BJ (cell line): ENCODE measurements at regions of chr1 and their contacts with region 1.

Region 1: GRCh38 chr1:103087256-103087655 is 21.1 kb downstream of the COL11A1 start:
- DNase-seq: no peak
- H3K4me3 ChIP-seq: no peak overlapping the region
- H3K27me3 ChIP-seq: no peaks in the 10 kb centered on the region
- CTCF ChIP-seq: no peak

Region 2: GRCh38 chr1:103069201-103069600 is 18.1 kb before region 1 on chr1:
- CTCF ChIA-PET with region 1: no interaction called
- POLR2A ChIA-PET with region 1: no interaction called
- DNase-seq: no peak
- H3K4me3 ChIP-seq: no peak overlapping the region
- H3K27me3 ChIP-seq: no peaks in the 10 kb centered on the region
- CTCF ChIP-seq: no peak

Region 3: DNA sequence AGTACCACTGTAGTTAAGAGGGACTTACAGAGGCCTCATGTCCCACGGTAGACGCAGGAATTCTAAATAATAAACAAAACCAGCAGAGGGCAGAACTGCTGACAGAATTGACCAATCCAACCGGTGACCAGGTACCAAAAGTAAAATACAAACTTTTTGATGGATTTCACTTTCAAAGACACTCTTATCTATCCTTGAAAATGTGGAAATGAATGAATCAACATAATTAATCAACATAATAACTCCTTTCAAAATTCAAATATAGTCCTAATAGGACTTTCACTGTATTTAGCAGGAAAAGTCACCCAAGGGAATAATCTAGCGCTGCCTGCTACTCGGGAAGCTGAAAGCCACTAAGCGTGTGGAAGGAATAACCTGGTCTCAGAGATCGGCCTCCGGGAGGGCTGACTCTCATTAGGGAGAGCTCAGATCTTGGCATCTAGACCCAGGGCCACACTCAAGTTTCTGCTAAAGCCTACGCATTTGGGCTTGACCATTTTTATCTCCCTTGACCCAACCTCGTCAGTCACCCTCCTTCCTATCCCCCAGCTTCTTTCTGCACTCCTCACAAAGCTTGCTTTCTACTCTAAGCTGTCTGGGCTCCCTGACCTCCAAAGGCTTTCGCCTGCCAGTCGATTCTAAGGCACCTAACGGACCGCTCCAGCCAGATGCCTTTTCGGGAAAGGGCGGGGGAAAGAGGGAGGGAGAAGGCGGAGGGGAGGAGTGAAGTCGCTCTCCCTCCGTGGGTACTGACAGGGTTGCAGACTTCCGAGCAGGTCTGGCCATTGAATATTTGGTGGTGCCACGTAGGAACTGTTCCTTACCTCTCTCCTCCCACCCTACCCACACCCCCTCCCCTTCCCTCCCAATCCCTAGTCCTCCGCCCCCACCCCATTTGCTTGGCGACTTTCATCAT is 19.4 kb after region 1 on chr1:
- CTCF ChIA-PET with region 1: interaction called, 19 read pairs
- POLR2A ChIA-PET with region 1: no interaction called
- DNase-seq: no peak
- H3K4me3 ChIP-seq: peak overlapping the region; percentile 65
- H3K27me3 ChIP-seq: no peaks in the 10 kb centered on the region
- CTCF ChIP-seq: peak; percentile 60